AG04450 (cell line): ENCODE measurements at regions of chr2 and their contacts with region 1.

Region 1: DNA sequence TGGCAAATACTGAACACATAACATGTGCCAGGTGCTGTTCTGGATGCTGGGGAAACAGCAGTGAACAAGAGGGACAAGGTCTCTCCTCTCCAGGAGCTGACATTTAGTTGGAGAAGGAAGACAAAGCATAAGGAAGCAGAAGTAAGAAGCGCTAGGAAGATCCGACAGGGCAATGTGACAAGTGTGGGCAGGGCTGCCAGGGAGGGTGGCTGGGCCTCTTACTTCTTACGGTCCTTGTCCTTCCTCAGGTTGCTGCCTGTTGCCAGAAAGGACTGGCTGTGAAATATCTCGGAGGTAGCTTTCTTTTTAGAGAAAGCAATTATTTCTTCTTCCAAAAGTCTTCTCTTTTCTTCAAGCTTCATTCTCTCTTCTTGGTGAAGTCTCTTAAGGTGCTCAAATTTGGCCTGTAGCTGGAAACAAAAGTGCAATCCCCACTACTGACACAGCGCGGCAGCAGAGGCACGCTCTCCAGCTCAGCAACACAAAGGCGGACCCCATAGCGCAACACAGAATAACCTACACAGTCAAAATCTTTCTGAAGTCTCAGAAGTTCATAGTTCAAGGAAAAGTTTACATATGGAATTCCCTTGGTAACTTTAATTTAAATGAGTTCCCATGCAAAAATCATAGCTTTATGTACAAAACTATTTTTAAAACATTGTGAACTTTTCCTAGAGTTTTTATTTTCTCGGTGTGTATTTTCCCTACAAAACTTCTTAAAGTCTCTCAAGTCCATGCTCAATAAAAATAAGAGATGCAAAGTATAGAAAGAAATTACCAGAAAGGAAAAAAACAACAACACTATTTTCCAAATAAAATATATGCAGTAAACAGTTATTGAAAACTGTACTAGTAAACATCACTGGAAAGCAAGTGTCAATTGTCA is 67.7 kb downstream of the SEPTIN10 start:
- DNase-seq: peak; percentile 27
- H3K4me3 ChIP-seq: no peak overlapping the region
- H3K27ac ChIP-seq: no peak overlapping the region
- H3K27me3 ChIP-seq: no peaks in the 10 kb centered on the region
- CTCF ChIP-seq: peak; percentile 97

Region 2: GRCh38 chr2:109206569-109207146 is 339.4 kb before region 1 on chr2:
- CTCF ChIA-PET with region 1: no interaction called
- POLR2A ChIA-PET with region 1: interaction called, 11 read pairs
- DNase-seq: no peak
- H3K4me3 ChIP-seq: no peak overlapping the region
- H3K27ac ChIP-seq: no peak overlapping the region
- H3K27me3 ChIP-seq: no peaks in the 10 kb centered on the region
- CTCF ChIP-seq: no peak

Region 3: DNA sequence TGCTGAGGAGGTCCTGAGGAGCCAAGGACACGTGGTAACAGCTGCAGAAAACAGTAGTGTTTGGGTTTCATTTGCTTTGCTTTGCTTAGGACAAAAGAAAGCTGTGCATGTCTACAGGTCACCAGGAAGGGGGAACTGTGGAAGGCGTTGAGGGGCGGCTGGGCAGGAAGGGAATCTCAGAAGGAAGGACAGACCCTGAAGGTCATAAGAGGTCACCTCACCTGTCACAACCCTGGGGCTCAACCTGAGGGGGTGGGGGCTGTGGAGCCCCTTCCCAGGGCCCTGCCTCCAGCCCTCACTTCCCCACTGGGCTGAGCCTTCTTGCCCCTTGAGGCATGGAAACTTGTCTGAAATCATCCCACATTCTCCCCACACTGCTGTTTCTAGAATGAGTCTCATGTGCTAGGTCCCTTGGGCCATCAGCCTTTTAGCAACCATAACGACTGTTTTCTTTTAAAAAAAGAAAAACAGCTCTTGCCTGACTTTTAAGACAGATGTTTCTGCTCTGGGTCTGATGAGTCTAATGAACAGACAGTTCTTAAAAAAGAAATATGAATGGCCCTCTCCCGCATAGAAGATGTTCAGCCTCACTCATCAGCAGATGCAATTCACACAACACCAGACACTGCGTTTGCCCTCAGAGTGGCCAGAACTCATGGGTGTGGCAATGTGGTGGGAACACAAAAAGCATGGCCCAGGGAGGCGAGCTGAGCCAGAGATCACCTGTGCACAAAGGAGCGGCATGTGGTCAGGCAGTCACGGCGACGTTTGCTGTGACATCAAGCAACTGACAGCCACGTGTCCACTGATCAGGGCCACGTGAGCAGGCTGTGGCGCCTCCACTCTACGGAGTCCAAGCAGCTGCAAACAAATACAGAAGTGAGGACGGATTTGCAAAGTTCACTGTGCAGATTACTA is 16.3 kb before region 1 on chr2:
- CTCF ChIA-PET with region 1: interaction called, 56 read pairs
- POLR2A ChIA-PET with region 1: no interaction called
- DNase-seq: no peak
- H3K4me3 ChIP-seq: no peak overlapping the region
- H3K27ac ChIP-seq: no peak overlapping the region
- H3K27me3 ChIP-seq: peaks cover 36% of the 10 kb centered on the region
- CTCF ChIP-seq: no peak

Region 4: GRCh38 chr2:109575373-109575772 is 29.3 kb after region 1 on chr2:
- CTCF ChIA-PET with region 1: interaction called, 10 read pairs
- POLR2A ChIA-PET with region 1: no interaction called
- DNase-seq: no peak
- H3K4me3 ChIP-seq: no peak overlapping the region
- H3K27ac ChIP-seq: no peak overlapping the region
- H3K27me3 ChIP-seq: no peaks in the 10 kb centered on the region
- CTCF ChIP-seq: no peak

Region 5: GRCh38 chr2:109604597-109604996 is 58.5 kb after region 1 on chr2:
- CTCF ChIA-PET with region 1: interaction called, 19 read pairs
- POLR2A ChIA-PET with region 1: interaction called, 6 read pairs
- DNase-seq: no peak
- H3K4me3 ChIP-seq: no peak overlapping the region
- H3K27ac ChIP-seq: no peak overlapping the region
- H3K27me3 ChIP-seq: no peaks in the 10 kb centered on the region
- CTCF ChIP-seq: no peak

Region 6: DNA sequence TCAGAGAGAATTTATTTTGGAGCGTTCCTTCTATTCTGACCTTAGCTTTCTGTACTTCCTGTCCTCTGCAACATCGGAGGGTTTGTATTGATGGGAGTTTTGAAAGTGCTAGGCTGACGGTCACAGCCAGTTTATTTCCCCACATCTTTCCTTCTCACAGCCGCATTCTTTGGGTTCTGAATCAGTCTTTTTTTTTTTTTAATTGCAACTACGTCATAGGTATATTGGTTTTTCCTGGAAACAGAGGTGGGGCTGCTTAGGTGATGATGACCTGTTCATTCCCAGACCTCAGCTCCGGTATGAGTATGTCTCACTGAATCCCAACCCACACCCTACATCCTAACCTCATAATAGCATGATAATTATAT is 156.5 kb after region 1 on chr2:
- CTCF ChIA-PET with region 1: interaction called, 10 read pairs
- POLR2A ChIA-PET with region 1: no interaction called
- DNase-seq: no peak
- H3K4me3 ChIP-seq: no peak overlapping the region
- H3K27ac ChIP-seq: no peak overlapping the region
- H3K27me3 ChIP-seq: peaks cover 2% of the 10 kb centered on the region
- CTCF ChIP-seq: no peak

Region 7: DNA sequence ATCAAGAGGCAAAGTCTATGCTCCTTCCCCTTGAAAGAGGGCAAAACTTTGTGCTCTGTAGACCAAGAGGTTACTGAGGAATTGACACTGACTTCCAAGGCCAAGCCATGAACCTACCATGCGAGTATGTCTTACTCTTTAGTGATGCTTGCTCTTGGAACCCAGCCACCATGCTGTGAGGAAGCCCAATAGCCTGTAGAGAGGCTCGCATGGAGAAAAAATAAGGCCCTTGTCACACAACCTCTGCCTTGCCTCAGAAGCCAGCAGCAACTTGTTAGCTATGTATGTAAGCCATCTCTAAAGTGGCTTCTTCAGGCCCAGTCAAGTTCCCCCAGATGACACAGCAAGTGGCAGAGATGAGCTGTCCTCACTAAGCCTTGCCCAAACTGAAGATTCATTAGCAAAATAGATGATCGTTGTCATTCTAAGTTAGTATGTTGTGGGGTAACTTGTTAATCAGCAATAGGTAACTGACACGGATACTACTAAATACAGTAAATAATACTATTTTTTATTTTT is 181.9 kb after region 1 on chr2:
- CTCF ChIA-PET with region 1: interaction called, 216 read pairs
- POLR2A ChIA-PET with region 1: interaction called, 6 read pairs
- DNase-seq: no peak
- H3K4me3 ChIP-seq: no peak overlapping the region
- H3K27ac ChIP-seq: no peak overlapping the region
- H3K27me3 ChIP-seq: peaks cover 25% of the 10 kb centered on the region
- CTCF ChIP-seq: no peak